ENCODE measurements at regions of chr6 and their contacts with region 1.

Region 1: GRCh38 chr6:89638320-89639195 is at the start of gene LYRM2:
- DNase-seq: peak; percentile 96
- ATAC-seq: peak; percentile 94
- H3K4me3 ChIP-seq: peak within 1 kb of the TSS; percentile 56 to 84 (median 79)
- H3K4me3 Mint-ChIP-seq: peak within 1 kb of the TSS; percentile 92
- H3K27ac ChIP-seq: peak within 1 kb of the TSS; percentile 91 to 99
- H3K27ac Mint-ChIP-seq: peak within 1 kb of the TSS; percentile 98
- H3K4me1 ChIP-seq: peaks cover 13 to 15% of the 10 kb centered on the region in 2 donors
- H3K4me1 Mint-ChIP-seq: peaks cover 28% of the 10 kb centered on the region
- H3K27me3 ChIP-seq: no peaks in the 10 kb centered on the region
- H3K27me3 Mint-ChIP-seq: no peaks in the 10 kb centered on the region
- CTCF ChIP-seq: no peak
- total RNA-seq, gene LYRM2: 31.4 and 33.7 TPM in 2 replicates

Region 2: GRCh38 chr6:88963139-88964090 is 675.1 kb before region 1 on chr6 and contains the start of gene RNGTT:
- CTCF ChIA-PET with region 1: no interaction called
- POLR2A ChIA-PET with region 1: interaction called, 5 read pairs
- intact Hi-C with region 1: loop called (anchors 1 kb)
- DNase-seq: peak; percentile 97
- ATAC-seq: peak; percentile 100
- H3K4me3 ChIP-seq: peak within 1 kb of the TSS; percentile 92 to 94 (median 94)
- H3K4me3 Mint-ChIP-seq: peak within 1 kb of the TSS; percentile 98
- H3K27ac ChIP-seq: peak within 1 kb of the TSS; percentile 64 to 87
- H3K27ac Mint-ChIP-seq: peak within 1 kb of the TSS; percentile 96
- H3K4me1 ChIP-seq: peaks cover 10 to 17% of the 10 kb centered on the region in 2 donors
- H3K4me1 Mint-ChIP-seq: peaks cover 34% of the 10 kb centered on the region
- H3K27me3 ChIP-seq: no peaks in the 10 kb centered on the region
- H3K27me3 Mint-ChIP-seq: no peaks in the 10 kb centered on the region
- CTCF ChIP-seq: no peak
- total RNA-seq, gene RNGTT: 29.1 and 34.0 TPM in 2 replicates

Region 3: DNA sequence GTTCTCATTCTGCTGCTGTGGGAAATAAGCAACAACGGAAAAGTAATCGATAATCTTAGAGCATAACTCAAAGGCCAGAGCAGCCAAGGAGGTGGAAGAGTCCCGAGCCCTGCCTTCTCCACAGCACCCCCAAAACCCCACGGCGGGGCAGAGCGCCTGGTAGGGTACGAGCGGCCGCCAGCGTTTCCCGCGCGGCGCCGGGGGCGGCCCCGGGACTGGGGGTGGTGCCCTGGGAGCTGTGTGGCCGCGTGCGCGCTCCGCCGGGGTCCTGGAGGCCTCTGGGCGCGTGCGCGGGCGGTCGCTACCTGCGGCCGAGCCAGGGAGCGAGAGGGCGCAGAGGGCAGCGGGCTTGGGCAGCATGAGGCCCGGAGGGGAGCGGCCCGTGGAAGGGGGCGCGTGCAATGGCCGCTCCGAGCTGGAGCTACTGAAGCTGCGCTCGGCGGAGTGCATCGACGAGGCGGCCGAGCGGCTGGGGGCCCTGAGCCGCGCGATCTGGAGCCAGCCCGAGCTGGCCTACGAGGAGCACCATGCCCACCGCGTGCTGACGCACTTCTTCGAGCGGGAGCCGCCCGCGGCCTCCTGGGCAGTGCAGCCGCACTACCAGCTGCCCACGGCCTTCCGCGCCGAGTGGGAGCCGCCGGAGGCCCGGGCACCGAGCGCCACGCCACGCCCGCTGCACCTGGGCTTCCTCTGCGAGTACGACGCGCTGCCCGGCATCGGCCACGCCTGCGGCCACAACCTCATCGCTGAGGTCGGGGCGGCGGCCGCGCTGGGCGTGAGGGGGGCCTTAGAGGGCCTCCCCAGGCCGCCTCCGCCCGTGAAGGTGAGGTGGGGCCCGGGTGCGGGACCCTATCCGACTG is 492.5 kb before region 1 on chr6 and contains the start of gene PM20D2:
- CTCF ChIA-PET with region 1: no interaction called
- POLR2A ChIA-PET with region 1: no interaction called
- intact Hi-C with region 1: loop called (anchors 5 kb)
- DNase-seq: peak; percentile 78
- ATAC-seq: peak; percentile 77
- H3K4me3 ChIP-seq: peak within 1 kb of the TSS; percentile 65 to 85 (median 73)
- H3K4me3 Mint-ChIP-seq: peak within 1 kb of the TSS; percentile 95
- H3K27ac ChIP-seq: peak within 1 kb of the TSS; percentile 87 to 88
- H3K27ac Mint-ChIP-seq: peak within 1 kb of the TSS; percentile 94
- H3K4me1 ChIP-seq: peaks cover 9 to 11% of the 10 kb centered on the region in 2 donors
- H3K4me1 Mint-ChIP-seq: peaks cover 28% of the 10 kb centered on the region
- H3K27me3 ChIP-seq: no peaks in the 10 kb centered on the region
- H3K27me3 Mint-ChIP-seq: no peaks in the 10 kb centered on the region
- CTCF ChIP-seq: no peak
- total RNA-seq, gene PM20D2: 15.3 and 16.4 TPM in 2 replicates

Region 4: GRCh38 chr6:89432875-89433251 is 205.7 kb before region 1 on chr6 and contains the start of gene ANKRD6:
- CTCF ChIA-PET with region 1: interaction called, 3 read pairs
- POLR2A ChIA-PET with region 1: interaction called, 3 read pairs
- intact Hi-C with region 1: loop called (anchors 1 kb)
- DNase-seq: peak; percentile 87
- ATAC-seq: peak; percentile 98
- H3K4me3 ChIP-seq: peak within 1 kb of the TSS; percentile 34 to 72 (median 69)
- H3K4me3 Mint-ChIP-seq: peak within 1 kb of the TSS; percentile 92
- H3K27ac ChIP-seq: no peak within 1 kb of the TSS
- H3K27ac Mint-ChIP-seq: peak within 1 kb of the TSS; percentile 60
- H3K4me1 ChIP-seq: peaks cover 10 to 12% of the 10 kb centered on the region in 2 donors
- H3K4me1 Mint-ChIP-seq: peaks cover 13% of the 10 kb centered on the region
- H3K27me3 ChIP-seq: no peaks in the 10 kb centered on the region
- H3K27me3 Mint-ChIP-seq: peaks cover 4% of the 10 kb centered on the region
- CTCF ChIP-seq: peak; percentile 83
- total RNA-seq, gene ANKRD6: 10.5 and 15.0 TPM in 2 replicates

Region 5: DNA sequence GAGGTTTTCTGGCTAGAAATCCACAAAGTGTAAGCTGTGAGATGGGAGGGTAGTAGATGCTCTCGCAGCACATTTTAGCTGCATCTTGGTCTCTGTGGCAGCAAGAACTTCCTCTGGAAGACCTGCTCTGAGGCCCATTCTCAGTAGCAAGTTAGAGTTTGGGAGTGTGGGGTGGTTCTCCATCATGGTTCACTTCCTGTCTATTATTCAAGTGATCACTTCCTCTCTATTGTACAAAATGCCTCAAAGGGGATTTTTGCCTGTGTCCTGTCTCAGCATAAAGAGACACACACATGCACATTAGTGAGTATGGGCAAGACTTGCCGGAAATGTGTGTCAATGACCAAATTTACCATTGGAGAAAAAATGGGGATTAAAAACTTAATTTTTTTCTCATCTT is 42.5 kb before region 1 on chr6:
- CTCF ChIA-PET with region 1: no interaction called
- POLR2A ChIA-PET with region 1: no interaction called
- intact Hi-C with region 1: loop called (anchors 1 kb)
- DNase-seq: peak; percentile 77
- ATAC-seq: peak; percentile 90
- H3K4me3 ChIP-seq: no peak overlapping the region
- H3K4me3 Mint-ChIP-seq: peak overlapping the region; percentile 17
- H3K27ac ChIP-seq: peak overlapping the region; percentile 56 to 92
- H3K27ac Mint-ChIP-seq: peak overlapping the region; percentile 84
- H3K4me1 ChIP-seq: peaks cover 30% of the 10 kb centered on the region in 2 donors
- H3K4me1 Mint-ChIP-seq: peaks cover 30% of the 10 kb centered on the region
- H3K27me3 ChIP-seq: no peaks in the 10 kb centered on the region
- H3K27me3 Mint-ChIP-seq: no peaks in the 10 kb centered on the region
- CTCF ChIP-seq: no peak

Region 6: GRCh38 chr6:89819336-89820130 is 181.0 kb after region 1 on chr6 and contains the start of gene MDN1:
- CTCF ChIA-PET with region 1: no interaction called
- POLR2A ChIA-PET with region 1: no interaction called
- intact Hi-C with region 1: loop called (anchors 1 kb)
- DNase-seq: peak; percentile 93
- ATAC-seq: peak; percentile 91
- H3K4me3 ChIP-seq: peak within 1 kb of the TSS; percentile 41 to 99 (median 89)
- H3K4me3 Mint-ChIP-seq: peak within 1 kb of the TSS; percentile 98
- H3K27ac ChIP-seq: peak within 1 kb of the TSS; percentile 80 to 85
- H3K27ac Mint-ChIP-seq: peak within 1 kb of the TSS; percentile 96
- H3K4me1 ChIP-seq: peaks cover 24 to 32% of the 10 kb centered on the region in 2 donors
- H3K4me1 Mint-ChIP-seq: peaks cover 29% of the 10 kb centered on the region
- H3K27me3 ChIP-seq: no peaks in the 10 kb centered on the region
- H3K27me3 Mint-ChIP-seq: no peaks in the 10 kb centered on the region
- CTCF ChIP-seq: no peak
- total RNA-seq, gene MDN1: 59.5 and 66.6 TPM in 2 replicates

Region 7: GRCh38 chr6:90586836-90587638 is 948.5 kb after region 1 on chr6 and contains the start of gene MAP3K7:
- CTCF ChIA-PET with region 1: no interaction called
- POLR2A ChIA-PET with region 1: no interaction called
- intact Hi-C with region 1: loop called (anchors 1 kb)
- DNase-seq: peak; percentile 97
- ATAC-seq: peak; percentile 85
- H3K4me3 ChIP-seq: peak within 1 kb of the TSS; percentile 91 to 98 (median 96)
- H3K4me3 Mint-ChIP-seq: peak within 1 kb of the TSS; percentile 98
- H3K27ac ChIP-seq: peak within 1 kb of the TSS; percentile 90 to 100
- H3K27ac Mint-ChIP-seq: peak within 1 kb of the TSS; percentile 100
- H3K4me1 ChIP-seq: peaks cover 15 to 30% of the 10 kb centered on the region in 2 donors
- H3K4me1 Mint-ChIP-seq: peaks cover 41% of the 10 kb centered on the region
- H3K27me3 ChIP-seq: peaks cover 0 to 6% (median 2%) of the 10 kb centered on the region in 4 experiments
- H3K27me3 Mint-ChIP-seq: peaks cover 12% of the 10 kb centered on the region
- CTCF ChIP-seq: no peak
- total RNA-seq, gene MAP3K7: 32.8 and 34.4 TPM in 2 replicates

Measured in B cell (primary cell).